Heart right ventricle (tissue), 16 donors: ENCODE measurements at regions of chr11 and their contacts with region 1.

Region 1: GRCh38 chr11:74170694-74171629 is at the starts of genes C2CD3 and PPME1:
- DNase-seq: peak; percentile 97 to 98
- ATAC-seq: peak; percentile 97 to 99 (median 98)
- H3K4me3 ChIP-seq: peak within 1 kb of the TSS; percentile 65 to 81 (median 72)
- H3K27ac ChIP-seq: peak within 1 kb of the TSS; percentile 46 to 95 (median 90)
- H3K4me1 ChIP-seq: peaks cover 2 to 48% (median 43%) of the 10 kb centered on the region in 9 donors
- H3K27me3 ChIP-seq: no peaks in the 10 kb centered on the region
- CTCF ChIP-seq: peak in 8 of 9 donors; percentile 15 to 60 (median 42)
- total RNA-seq, gene C2CD3: 8.4 to 14.8 (median 12.2) TPM
- total RNA-seq, gene PPME1: 24.5 to 35.3 (median 30.7) TPM

Region 2: GRCh38 chr11:73982969-73983740 is 187.8 kb before region 1 on chr11:
- intact Hi-C with region 1: loop called in 1 of 10 experiments (anchors 10 kb)
- DNase-seq: peak; percentile 93
- ATAC-seq: peak; percentile 92 to 97 (median 96)
- H3K4me3 ChIP-seq: peak overlapping the region; percentile 26 to 88 (median 64)
- H3K27ac ChIP-seq: peak overlapping the region; percentile 55 to 94 (median 81)
- H3K4me1 ChIP-seq: peaks cover 0 to 52% (median 15%) of the 10 kb centered on the region in 9 donors
- H3K27me3 ChIP-seq: no peaks in the 10 kb centered on the region
- CTCF ChIP-seq: no peak

Region 3: DNA sequence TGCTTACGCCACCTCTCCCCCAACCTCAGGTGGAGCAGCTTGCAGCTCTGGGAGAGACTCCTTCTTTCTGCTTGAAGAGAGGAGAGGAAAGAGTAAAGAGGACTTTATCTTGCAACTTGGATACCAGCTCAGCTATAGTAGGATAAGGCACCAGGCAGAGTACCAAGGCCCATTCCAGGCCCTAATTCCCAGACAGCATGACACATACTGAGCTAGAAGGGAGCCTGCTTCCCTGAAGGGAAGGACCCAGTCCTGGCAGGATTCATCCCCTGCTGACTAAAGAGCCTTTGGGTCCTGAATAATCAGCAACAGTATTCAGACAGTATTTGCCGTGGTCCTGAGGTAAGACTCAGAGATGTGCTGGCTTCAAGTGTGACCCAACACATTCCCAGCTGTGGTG is 41.6 kb after region 1 on chr11:
- intact Hi-C with region 1: no loop called
- DNase-seq: no peak
- ATAC-seq: peak in 3 of 8 donors; percentile 28 to 73 (median 65)
- H3K4me3 ChIP-seq: no peak overlapping the region
- H3K27ac ChIP-seq: no peak overlapping the region
- H3K4me1 ChIP-seq: no peaks in the 10 kb centered on the region
- H3K27me3 ChIP-seq: no peaks in the 10 kb centered on the region
- CTCF ChIP-seq: no peak

Region 4: DNA sequence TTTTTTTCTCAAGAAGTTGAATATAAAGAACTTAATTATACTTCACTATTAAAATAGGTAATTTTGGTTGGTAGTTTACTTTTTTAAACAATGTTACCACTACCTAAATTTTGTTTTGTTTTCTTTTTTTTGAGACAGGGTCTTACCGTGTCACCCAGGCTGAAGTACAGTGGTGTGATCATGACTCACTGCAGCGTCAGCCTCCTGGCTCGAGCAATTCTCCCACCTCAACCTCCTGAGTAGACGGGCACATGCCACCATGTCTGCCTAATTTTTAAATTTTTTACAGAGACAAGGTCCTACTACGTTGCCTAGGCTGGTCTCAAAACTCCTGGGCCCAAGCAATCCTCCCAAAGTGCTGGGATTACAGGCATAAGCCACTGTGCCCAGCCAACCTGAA is 795.7 kb after region 1 on chr11:
- intact Hi-C with region 1: loop called in 1 of 10 experiments (anchors 10 kb)
- DNase-seq: no peak
- ATAC-seq: no peak
- H3K4me3 ChIP-seq: no peak overlapping the region
- H3K27ac ChIP-seq: no peak overlapping the region
- H3K4me1 ChIP-seq: peaks cover 0 to 38% (median 26%) of the 10 kb centered on the region in 9 donors
- H3K27me3 ChIP-seq: no peaks in the 10 kb centered on the region
- CTCF ChIP-seq: no peak